Colonic mucosa (tissue), 4 donors: ENCODE measurements at regions of chr5 and their contacts with region 1.

Region 1: DNA sequence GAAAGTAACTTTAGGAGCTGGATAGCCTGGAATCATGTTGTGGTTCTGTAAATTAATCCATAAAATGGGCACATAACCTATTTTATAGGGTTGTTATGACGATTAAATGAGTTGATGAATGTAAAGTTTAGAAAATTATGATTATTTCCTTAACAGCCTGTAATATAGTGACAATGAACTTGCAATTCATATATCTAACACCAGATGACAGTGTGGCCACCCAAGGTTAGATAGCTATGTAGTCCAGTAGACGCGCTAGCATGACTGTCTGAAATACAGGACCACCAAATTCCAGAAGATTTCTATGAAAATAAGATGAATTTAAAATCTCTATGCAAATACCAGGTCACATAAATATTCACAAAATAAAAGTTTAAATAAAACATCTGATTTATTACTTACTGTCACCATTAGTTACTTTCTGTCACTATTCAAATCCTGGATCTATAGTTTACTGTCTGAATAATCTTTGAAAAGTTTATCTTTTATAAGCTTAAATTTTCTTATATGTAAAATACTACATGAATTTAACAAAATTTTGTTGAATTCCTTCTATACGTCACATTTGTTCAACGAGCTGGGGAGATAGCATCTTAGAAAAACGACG is 26.1 kb upstream of the MACIR start:
- DNase-seq: no peak
- H3K4me3 ChIP-seq: no peak overlapping the region
- H3K27ac ChIP-seq: no peak overlapping the region
- H3K4me1 ChIP-seq: no peaks in the 10 kb centered on the region
- H3K27me3 ChIP-seq: no peaks in the 10 kb centered on the region
- CTCF ChIP-seq: peak; percentile 78

Region 2: GRCh38 chr5:103475629-103476240 is 243.2 kb after region 1 on chr5:
- intact Hi-C with region 1: loop called (anchors 2 kb)
- DNase-seq: no peak
- H3K4me3 ChIP-seq: no peak overlapping the region
- H3K27ac ChIP-seq: no peak overlapping the region
- H3K4me1 ChIP-seq: no peaks in the 10 kb centered on the region
- H3K27me3 ChIP-seq: no peaks in the 10 kb centered on the region
- CTCF ChIP-seq: peak; percentile 60